ENCODE measurements at regions of chr17 and their contacts with region 1.

Region 1: DNA sequence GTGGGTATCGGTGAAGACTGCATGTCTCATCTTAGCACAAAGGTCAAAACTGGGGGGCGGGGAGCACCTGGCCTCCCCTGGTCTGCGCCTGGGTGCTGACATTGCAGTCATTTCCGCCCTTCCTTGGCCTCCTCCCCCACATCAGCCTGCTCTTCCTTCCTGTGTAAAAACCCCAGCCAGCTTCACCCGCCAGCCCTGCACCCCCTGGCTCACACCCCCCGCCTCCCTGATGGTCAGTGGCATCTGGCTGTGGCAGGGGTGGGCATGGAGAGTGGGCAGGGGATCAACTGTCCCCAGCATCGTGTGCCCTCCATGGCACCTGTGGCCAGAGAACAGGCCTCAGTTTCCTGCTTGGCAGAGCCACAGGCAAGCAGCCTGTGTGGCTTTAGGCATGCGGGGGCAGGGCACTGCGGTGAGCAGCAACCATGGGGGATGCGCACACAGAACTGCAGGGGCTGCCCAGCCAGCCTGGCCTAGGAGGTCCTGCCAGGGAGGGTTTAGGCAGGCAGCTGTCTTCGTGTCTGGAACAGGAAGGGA is 26.5 kb upstream of the LASP1NB start:
- DNase-seq: peak; percentile 95
- ATAC-seq: peak; percentile 91
- H3K4me3 Mint-ChIP-seq: peak overlapping the region; percentile 70
- H3K27ac Mint-ChIP-seq: peak overlapping the region; percentile 98
- H3K4me1 Mint-ChIP-seq: peaks cover 65% of the 10 kb centered on the region
- H3K27me3 Mint-ChIP-seq: no peaks in the 10 kb centered on the region

Region 2: GRCh38 chr17:38789185-38789584 is 109.7 kb before region 1 on chr17:
- CTCF ChIA-PET with region 1: no interaction called
- POLR2A ChIA-PET with region 1: no interaction called
- intact Hi-C with region 1: no loop called
- DNase-seq: no peak
- ATAC-seq: no peak
- H3K4me3 Mint-ChIP-seq: no peak overlapping the region
- H3K27ac Mint-ChIP-seq: no peak overlapping the region
- H3K4me1 Mint-ChIP-seq: peaks cover under 1% of the 10 kb centered on the region
- H3K27me3 Mint-ChIP-seq: no peaks in the 10 kb centered on the region

Region 3: GRCh38 chr17:38815576-38816193 is 83.2 kb before region 1 on chr17:
- CTCF ChIA-PET with region 1: no interaction called
- POLR2A ChIA-PET with region 1: no interaction called
- intact Hi-C with region 1: no loop called
- DNase-seq: peak; percentile 47
- ATAC-seq: peak; percentile 88
- H3K4me3 Mint-ChIP-seq: no peak overlapping the region
- H3K27ac Mint-ChIP-seq: no peak overlapping the region
- H3K4me1 Mint-ChIP-seq: peaks cover 8% of the 10 kb centered on the region
- H3K27me3 Mint-ChIP-seq: no peaks in the 10 kb centered on the region

Region 4: DNA sequence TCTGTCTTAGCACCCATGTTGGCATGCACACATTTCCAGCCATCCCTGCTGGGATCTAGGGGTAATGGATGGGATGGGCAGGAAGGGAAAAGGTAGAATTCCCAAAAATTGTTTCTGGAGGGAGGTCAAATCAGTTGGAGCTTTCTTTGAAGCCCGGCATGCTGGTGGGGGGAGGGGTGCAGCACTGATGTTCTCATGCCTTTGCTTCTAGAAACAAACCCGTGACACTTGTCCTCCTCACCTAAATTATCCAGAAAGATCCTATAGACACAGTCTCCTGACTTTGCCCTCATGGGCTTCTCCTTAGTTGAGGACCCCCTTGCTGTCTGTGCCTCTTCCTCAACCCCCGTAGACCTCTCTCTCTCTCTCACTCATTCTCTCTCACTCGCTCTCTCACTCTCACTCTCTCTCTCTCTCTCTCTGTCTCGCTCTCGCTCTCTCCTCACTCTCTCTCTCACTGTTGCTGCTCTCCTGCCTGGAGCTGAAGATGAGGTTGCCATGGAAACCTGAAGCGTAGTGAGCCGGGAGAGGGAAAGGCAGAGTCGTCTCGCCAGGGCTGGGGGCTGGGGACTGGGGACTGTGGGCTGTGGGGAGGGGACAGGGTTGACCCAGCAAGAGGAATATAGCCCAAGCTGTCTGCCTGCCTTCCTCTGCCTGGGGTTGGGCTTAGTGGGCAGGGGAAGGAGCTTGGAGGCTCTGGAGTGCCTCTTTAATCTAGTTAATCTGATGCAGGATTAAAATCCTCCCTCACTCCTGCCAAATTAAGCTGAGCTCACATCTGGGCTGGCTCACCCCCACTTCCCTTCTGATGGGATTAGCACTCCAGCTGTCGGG is 12.9 kb before region 1 on chr17:
- CTCF ChIA-PET with region 1: interaction called, 10 read pairs
- POLR2A ChIA-PET with region 1: interaction called, 5 read pairs
- intact Hi-C with region 1: no loop called
- DNase-seq: no peak
- ATAC-seq: no peak
- H3K4me3 Mint-ChIP-seq: peak overlapping the region; percentile 0
- H3K27ac Mint-ChIP-seq: peak overlapping the region; percentile 26
- H3K4me1 Mint-ChIP-seq: peaks cover 90% of the 10 kb centered on the region
- H3K27me3 Mint-ChIP-seq: no peaks in the 10 kb centered on the region

Region 5: GRCh38 chr17:38925263-38925995 is 26.5 kb after region 1 on chr17 and contains the start of gene LASP1NB:
- CTCF ChIA-PET with region 1: interaction called, 7 read pairs
- POLR2A ChIA-PET with region 1: interaction called, 3 read pairs
- intact Hi-C with region 1: loop called in 1 of 2 experiments (anchors 1 kb)
- DNase-seq: peak; percentile 73
- ATAC-seq: peak; percentile 37
- H3K4me3 Mint-ChIP-seq: peak within 1 kb of the TSS; percentile 3
- H3K27ac Mint-ChIP-seq: peak within 1 kb of the TSS; percentile 38
- H3K4me1 Mint-ChIP-seq: peaks cover 43% of the 10 kb centered on the region
- H3K27me3 Mint-ChIP-seq: no peaks in the 10 kb centered on the region

Region 6: GRCh38 chr17:39294060-39294459 is 395.2 kb after region 1 on chr17:
- CTCF ChIA-PET with region 1: no interaction called
- POLR2A ChIA-PET with region 1: no interaction called
- intact Hi-C with region 1: no loop called
- DNase-seq: no peak
- ATAC-seq: no peak
- H3K4me3 Mint-ChIP-seq: no peak overlapping the region
- H3K27ac Mint-ChIP-seq: no peak overlapping the region
- H3K4me1 Mint-ChIP-seq: no peaks in the 10 kb centered on the region
- H3K27me3 Mint-ChIP-seq: no peaks in the 10 kb centered on the region